ENCODE measurements at regions of chr13 and their contacts with region 1.

Region 1: GRCh38 chr13:79589603-79590393 is 108.8 kb downstream of the NDFIP2 start:
- DNase-seq: peak; percentile 95
- H3K4me3 ChIP-seq: peak overlapping the region; percentile 34 to 41 (median 39)
- H3K27ac ChIP-seq: peak overlapping the region; percentile 91
- H3K4me1 ChIP-seq: peaks cover 46% of the 10 kb centered on the region
- H3K27me3 ChIP-seq: no peaks in the 10 kb centered on the region
- CTCF ChIP-seq: no peak

Region 2: DNA sequence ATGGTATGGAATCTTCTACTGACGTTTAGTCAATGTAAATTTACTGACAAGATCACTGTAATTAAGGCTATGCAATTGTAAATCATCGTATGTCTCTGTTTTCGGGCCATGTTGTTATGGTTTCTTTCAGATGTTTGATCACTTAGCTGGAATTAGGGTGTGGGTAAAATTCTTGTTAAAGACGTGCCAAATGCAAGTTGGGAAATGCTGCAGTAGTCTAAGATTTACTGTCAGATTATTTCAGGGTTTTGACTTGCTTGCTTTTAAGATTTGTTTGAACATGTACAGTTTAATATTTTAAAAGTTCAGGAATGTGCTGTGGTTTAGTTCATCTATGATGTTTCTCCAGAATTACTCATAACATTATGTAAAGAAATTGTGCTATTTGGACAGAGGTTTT is 98.1 kb before region 1 on chr13:
- CTCF ChIA-PET with region 1: no interaction called
- dilution Hi-C with region 1: loop called (anchors 5 kb)
- in situ Hi-C with region 1: no loop called
- intact Hi-C with region 1: no loop called
- DNase-seq: peak; percentile 95
- H3K4me3 ChIP-seq: peak overlapping the region in 2 of 3 experiments; percentile 30 to 61
- H3K27ac ChIP-seq: peak overlapping the region; percentile 100
- H3K4me1 ChIP-seq: peaks cover 55% of the 10 kb centered on the region
- H3K27me3 ChIP-seq: no peaks in the 10 kb centered on the region
- CTCF ChIP-seq: no peak

Region 3: DNA sequence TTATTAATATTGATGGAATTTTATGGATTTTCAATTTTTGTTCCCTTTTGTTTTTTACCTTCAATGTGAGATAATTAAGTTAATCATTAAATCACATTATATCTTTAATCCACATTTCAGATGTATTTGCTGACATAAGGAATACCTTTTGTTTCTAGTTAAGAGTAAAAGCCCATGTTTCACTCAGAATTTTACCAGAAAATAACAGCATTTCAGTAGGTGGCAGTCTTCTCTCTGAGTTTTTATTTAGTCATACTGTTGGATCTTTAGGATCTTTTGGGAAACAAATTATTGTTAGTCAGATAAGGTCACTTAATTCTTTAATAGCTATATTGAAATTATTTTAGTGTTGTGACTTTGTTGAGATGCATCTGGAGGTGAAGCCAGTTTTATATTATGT is 40.9 kb before region 1 on chr13:
- CTCF ChIA-PET with region 1: no interaction called
- dilution Hi-C with region 1: loop called (anchors 5 kb)
- in situ Hi-C with region 1: no loop called
- intact Hi-C with region 1: no loop called
- DNase-seq: peak; percentile 23
- H3K4me3 ChIP-seq: no peak overlapping the region
- H3K27ac ChIP-seq: peak overlapping the region; percentile 3
- H3K4me1 ChIP-seq: peaks cover 5% of the 10 kb centered on the region
- H3K27me3 ChIP-seq: no peaks in the 10 kb centered on the region
- CTCF ChIP-seq: peak; percentile 48 to 55

Region 4: GRCh38 chr13:79560953-79561352 is 28.8 kb before region 1 on chr13:
- CTCF ChIA-PET with region 1: no interaction called
- dilution Hi-C with region 1: no loop called
- in situ Hi-C with region 1: no loop called
- intact Hi-C with region 1: loop called (anchors 5 kb)
- DNase-seq: peak; percentile 55
- H3K4me3 ChIP-seq: no peak overlapping the region
- H3K27ac ChIP-seq: no peak overlapping the region
- H3K4me1 ChIP-seq: peaks cover 3% of the 10 kb centered on the region
- H3K27me3 ChIP-seq: no peaks in the 10 kb centered on the region
- CTCF ChIP-seq: no peak

Region 5: GRCh38 chr13:79621449-79621848 is 31.7 kb after region 1 on chr13:
- CTCF ChIA-PET with region 1: no interaction called
- dilution Hi-C with region 1: no loop called
- in situ Hi-C with region 1: no loop called
- intact Hi-C with region 1: loop called (anchors 2 kb)
- DNase-seq: peak; percentile 68
- H3K4me3 ChIP-seq: no peak overlapping the region
- H3K27ac ChIP-seq: peak overlapping the region; percentile 95
- H3K4me1 ChIP-seq: peaks cover 44% of the 10 kb centered on the region
- H3K27me3 ChIP-seq: no peaks in the 10 kb centered on the region
- CTCF ChIP-seq: no peak

Region 6: GRCh38 chr13:80529734-80530133 is 939.9 kb after region 1 on chr13:
- CTCF ChIA-PET with region 1: no interaction called
- dilution Hi-C with region 1: no loop called
- in situ Hi-C with region 1: no loop called
- intact Hi-C with region 1: no loop called
- DNase-seq: peak; percentile 14
- H3K4me3 ChIP-seq: no peak overlapping the region
- H3K27ac ChIP-seq: no peak overlapping the region
- H3K4me1 ChIP-seq: no peaks in the 10 kb centered on the region
- H3K27me3 ChIP-seq: no peaks in the 10 kb centered on the region
- CTCF ChIP-seq: no peak